Gastrocnemius medialis (tissue), 4 donors: ENCODE measurements at regions of chr14 and their contacts with region 1.

Region 1: GRCh38 chr14:52552063-52552988 is at the starts of genes GPR137C and TXNDC16:
- DNase-seq: peak; percentile 100
- ATAC-seq: peak; percentile 96
- H3K4me3 ChIP-seq: peak within 1 kb of the TSS; percentile 84 to 92 (median 90)
- H3K27ac ChIP-seq: peak within 1 kb of the TSS; percentile 91 to 95 (median 94)
- H3K4me1 ChIP-seq: peaks cover 16 to 19% of the 10 kb centered on the region in 2 donors
- H3K27me3 ChIP-seq: no peaks in the 10 kb centered on the region
- CTCF ChIP-seq: no peak
- POLR2A ChIP-seq: peak; percentile 95 to 99
- total RNA-seq, gene GPR137C: 0.10 to 0.42 (median 0.38) TPM in 3 of 4 donors, not detected in the other
- total RNA-seq, gene TXNDC16: 2.4 to 4.0 (median 2.9) TPM

Region 2: GRCh38 chr14:52443506-52443905 is 108.8 kb before region 1 on chr14:
- in situ Hi-C with region 1: no loop called
- intact Hi-C with region 1: no loop called
- DNase-seq: no peak
- ATAC-seq: no peak
- H3K4me3 ChIP-seq: no peak overlapping the region
- H3K27ac ChIP-seq: no peak overlapping the region
- H3K4me1 ChIP-seq: no peaks in the 10 kb centered on the region
- H3K27me3 ChIP-seq: no peaks in the 10 kb centered on the region
- CTCF ChIP-seq: no peak
- POLR2A ChIP-seq: no peak

Region 3: DNA sequence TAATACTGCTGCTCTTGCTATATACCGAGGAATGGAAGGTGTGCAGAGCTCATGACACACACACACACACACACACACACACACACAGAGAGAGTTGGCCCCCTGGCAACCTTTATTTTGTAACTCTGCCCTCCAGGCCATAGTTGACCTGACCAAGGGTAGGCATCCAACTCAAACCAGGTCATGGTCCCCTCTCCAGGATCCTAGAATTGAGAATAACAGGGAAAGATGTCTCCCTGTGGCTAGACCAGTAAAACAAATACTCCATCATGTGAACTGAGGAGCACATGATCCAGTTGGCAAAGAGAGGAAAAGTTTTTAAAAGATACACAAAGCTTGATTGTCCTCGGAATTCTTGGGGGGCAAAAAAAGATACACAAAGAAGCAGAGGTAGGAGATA is 131.7 kb after region 1 on chr14:
- in situ Hi-C with region 1: loop called in 1 of 4 experiments (anchors 10 kb)
- intact Hi-C with region 1: no loop called
- DNase-seq: no peak
- ATAC-seq: no peak
- H3K4me3 ChIP-seq: no peak overlapping the region
- H3K27ac ChIP-seq: no peak overlapping the region
- H3K4me1 ChIP-seq: no peaks in the 10 kb centered on the region
- H3K27me3 ChIP-seq: no peaks in the 10 kb centered on the region
- CTCF ChIP-seq: no peak
- POLR2A ChIP-seq: no peak

Region 4: GRCh38 chr14:52706724-52707706 is 154.7 kb after region 1 on chr14 and contains the start of gene PSMC6:
- in situ Hi-C with region 1: no loop called
- intact Hi-C with region 1: loop called (anchors 1 kb)
- DNase-seq: peak; percentile 93 to 94
- ATAC-seq: peak; percentile 98
- H3K4me3 ChIP-seq: peak within 1 kb of the TSS; percentile 76 to 94 (median 88)
- H3K27ac ChIP-seq: peak within 1 kb of the TSS; percentile 92 to 95 (median 94)
- H3K4me1 ChIP-seq: peaks cover 16 to 20% of the 10 kb centered on the region in 2 donors
- H3K27me3 ChIP-seq: no peaks in the 10 kb centered on the region
- CTCF ChIP-seq: no peak
- POLR2A ChIP-seq: peak; percentile 67 to 78
- total RNA-seq, gene PSMC6: 158 to 251 (median 178) TPM

Region 5: GRCh38 chr14:52791203-52792096 is 239.1 kb after region 1 on chr14 and contains the start of gene GNPNAT1:
- in situ Hi-C with region 1: no loop called
- intact Hi-C with region 1: loop called (anchors 2 kb)
- DNase-seq: peak; percentile 67 to 74
- ATAC-seq: peak; percentile 85 to 86
- H3K4me3 ChIP-seq: peak within 1 kb of the TSS; percentile 86 to 93 (median 88)
- H3K27ac ChIP-seq: peak within 1 kb of the TSS; percentile 87 to 90 (median 88)
- H3K4me1 ChIP-seq: peaks cover 18% of the 10 kb centered on the region in 2 donors
- H3K27me3 ChIP-seq: no peaks in the 10 kb centered on the region
- CTCF ChIP-seq: no peak
- POLR2A ChIP-seq: peak; percentile 51 to 68
- total RNA-seq, gene GNPNAT1: 10.0 to 19.4 (median 12.4) TPM